K562 (cell line): ENCODE measurements at regions of chr7 and their contacts with region 1.

Region 1: GRCh38 chr7:128959296-128959695 is 21.6 kb downstream of the IRF5 start:
- DNase-seq: no peak
- ATAC-seq: no peak
- H3K4me3 ChIP-seq: no peak overlapping the region
- H3K27ac ChIP-seq: no peak overlapping the region
- H3K4me1 ChIP-seq: no peaks in the 10 kb centered on the region
- H3K27me3 ChIP-seq: no peaks in the 10 kb centered on the region
- CTCF ChIP-seq: no peak
- EP300 ChIP-seq: no peak
- POLR2A ChIP-seq: no peak
- RAD21 ChIP-seq: no peak

Region 2: DNA sequence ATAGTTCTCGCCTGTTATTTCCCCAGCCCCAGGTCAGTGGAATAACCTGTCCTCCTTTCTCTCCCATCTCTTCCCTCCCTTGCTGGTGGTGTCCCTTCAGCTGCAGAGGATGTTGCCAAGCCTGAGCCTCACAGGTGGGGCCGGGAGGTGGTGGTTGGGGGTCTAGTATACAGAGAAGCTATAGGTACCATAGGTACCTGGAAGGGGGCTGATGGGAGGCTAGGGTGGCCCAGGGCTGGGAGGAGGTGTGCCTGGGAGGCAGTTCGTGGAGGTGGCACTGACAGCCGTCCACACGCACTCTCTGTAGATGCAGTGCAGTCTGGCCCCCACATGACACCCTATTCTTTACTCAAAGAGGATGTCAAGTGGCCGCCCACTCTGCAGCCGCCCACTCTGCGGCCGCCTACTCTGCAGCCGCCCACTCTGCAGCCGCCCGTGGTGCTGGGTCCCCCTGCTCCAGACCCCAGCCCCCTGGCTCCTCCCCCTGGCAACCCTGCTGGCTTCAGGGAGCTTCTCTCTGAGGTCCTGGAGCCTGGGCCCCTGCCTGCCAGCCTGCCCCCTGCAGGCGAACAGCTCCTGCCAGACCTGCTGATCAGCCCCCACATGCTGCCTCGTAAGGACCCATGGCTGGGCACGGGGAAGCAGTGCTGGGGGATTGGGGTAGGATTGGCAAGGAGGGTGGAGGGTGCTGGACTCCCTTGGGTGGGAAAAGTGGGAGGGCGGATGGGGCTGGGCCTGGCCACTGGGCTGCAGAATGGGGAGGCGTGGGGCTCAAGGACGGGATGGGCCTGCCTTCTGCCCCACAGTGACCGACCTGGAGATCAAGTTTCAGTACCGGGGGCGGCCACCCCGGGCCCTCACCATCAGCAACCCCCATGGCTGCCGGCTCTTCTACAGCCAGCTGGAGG is 12.1 kb before region 1 on chr7:
- CTCF ChIA-PET with region 1: no interaction called
- POLR2A ChIA-PET with region 1: interaction called, 28 read pairs
- in situ Hi-C with region 1: no loop called
- intact Hi-C with region 1: no loop called
- DNase-seq: peak in 1 of 4 experiments; percentile 27
- ATAC-seq: peak; percentile 46
- H3K4me3 ChIP-seq: no peak overlapping the region
- H3K27ac ChIP-seq: no peak overlapping the region
- H3K4me1 ChIP-seq: peaks cover 0 to 21% of the 10 kb centered on the region in 2 experiments; a peak in 2 of 5 replicates
- H3K27me3 ChIP-seq: peaks cover 20 to 30% of the 10 kb centered on the region in 2 experiments; a peak in 4 of 5 replicates
- CTCF ChIP-seq: peak; percentile 50 to 60 (median 51)
- EP300 ChIP-seq: no peak
- POLR2A ChIP-seq: no peak
- RAD21 ChIP-seq: no peak